ENCODE measurements at regions of chr2 and their contacts with region 1.

Region 1: DNA sequence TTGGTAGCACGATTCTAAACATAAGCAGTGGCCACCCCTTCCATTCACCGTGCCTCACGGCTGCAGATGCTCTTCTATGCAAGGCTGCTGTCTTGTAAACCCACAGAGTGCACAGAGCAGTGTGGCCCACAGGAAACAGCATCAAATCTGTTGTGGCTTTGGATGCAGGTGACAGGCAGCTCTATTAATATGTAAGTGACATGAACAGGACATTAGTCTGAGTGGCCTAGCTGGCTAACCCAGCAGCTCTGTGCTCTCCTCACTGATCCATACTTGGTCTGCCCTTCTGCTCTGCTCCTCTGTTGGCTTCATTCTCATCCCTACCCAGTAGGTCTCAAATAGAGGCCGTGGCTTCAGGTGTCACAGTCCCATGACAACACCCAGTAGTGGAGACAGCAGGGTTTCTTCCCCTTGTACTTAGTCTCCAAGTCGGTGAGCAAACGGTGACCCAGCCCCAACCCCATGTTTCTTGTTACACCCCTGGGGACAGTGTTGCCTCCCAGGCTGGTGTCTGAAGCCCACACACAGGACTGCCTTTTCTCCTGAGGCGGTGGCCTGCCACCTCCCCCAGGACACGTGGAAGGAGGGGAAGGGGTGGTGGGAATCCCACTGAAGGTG is 5.8 kb downstream of the SH3RF3 start:
- DNase-seq: no peak
- H3K4me3 Mint-ChIP-seq: no peak overlapping the region
- H3K27ac Mint-ChIP-seq: no peak overlapping the region
- H3K4me1 Mint-ChIP-seq: peaks cover 22% of the 10 kb centered on the region
- H3K27me3 Mint-ChIP-seq: peaks cover 72% of the 10 kb centered on the region

Region 2: DNA sequence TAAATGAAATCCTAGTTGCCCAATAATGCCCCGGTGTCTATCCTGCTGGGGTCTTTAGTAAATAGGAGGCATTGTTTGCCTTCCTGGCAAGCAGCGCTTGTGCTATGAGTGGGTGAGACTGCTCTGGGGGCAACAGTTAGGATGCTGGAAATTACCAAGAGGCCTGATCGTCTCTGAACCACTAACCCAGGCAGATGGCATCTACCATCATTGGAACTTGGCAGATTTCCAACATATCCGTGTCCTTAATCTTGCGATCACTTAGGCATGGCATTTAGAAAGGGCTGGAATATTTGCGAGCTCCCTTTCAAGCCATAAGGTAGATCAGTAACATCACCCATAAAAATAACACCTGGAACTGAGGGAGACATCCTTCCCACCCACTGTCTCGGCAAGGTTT is 24.7 kb before region 1 on chr2:
- CTCF ChIA-PET with region 1: no interaction called
- DNase-seq: no peak
- H3K4me3 Mint-ChIP-seq: no peak overlapping the region
- H3K27ac Mint-ChIP-seq: no peak overlapping the region
- H3K4me1 Mint-ChIP-seq: no peaks in the 10 kb centered on the region
- H3K27me3 Mint-ChIP-seq: no peaks in the 10 kb centered on the region

Region 3: DNA sequence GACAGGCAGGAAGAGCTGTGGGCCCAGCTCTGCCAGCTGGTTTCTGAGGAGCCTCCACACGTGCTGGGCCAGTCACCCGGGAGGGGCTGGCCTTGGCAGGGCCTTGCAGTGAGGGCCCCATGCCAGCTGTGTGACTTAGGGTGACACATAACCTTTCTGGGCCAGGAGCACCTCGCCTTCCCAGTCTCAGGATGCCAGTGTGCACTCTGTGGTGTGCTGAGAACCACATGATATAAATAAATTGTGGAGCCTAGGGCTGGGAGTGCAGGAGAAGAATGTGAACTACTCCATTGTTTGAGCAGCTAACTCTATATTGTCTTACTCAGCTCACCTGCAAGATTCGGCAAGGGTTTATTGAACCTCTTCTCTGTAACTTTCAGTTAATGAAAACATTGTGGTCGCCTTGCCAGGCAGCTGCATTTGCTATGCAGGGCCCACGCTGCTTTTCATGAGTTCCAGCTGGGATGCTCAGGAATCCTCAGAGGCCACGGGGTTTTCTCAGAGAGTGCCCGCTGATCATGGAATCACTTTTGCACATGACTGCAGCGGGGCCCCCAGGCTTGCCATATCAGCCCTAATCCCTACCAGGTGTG is 216.4 kb after region 1 on chr2:
- CTCF ChIA-PET with region 1: no interaction called
- DNase-seq: no peak
- H3K4me3 Mint-ChIP-seq: no peak overlapping the region
- H3K27ac Mint-ChIP-seq: no peak overlapping the region
- H3K4me1 Mint-ChIP-seq: peaks cover 43% of the 10 kb centered on the region
- H3K27me3 Mint-ChIP-seq: peaks cover 15% of the 10 kb centered on the region

Region 4: DNA sequence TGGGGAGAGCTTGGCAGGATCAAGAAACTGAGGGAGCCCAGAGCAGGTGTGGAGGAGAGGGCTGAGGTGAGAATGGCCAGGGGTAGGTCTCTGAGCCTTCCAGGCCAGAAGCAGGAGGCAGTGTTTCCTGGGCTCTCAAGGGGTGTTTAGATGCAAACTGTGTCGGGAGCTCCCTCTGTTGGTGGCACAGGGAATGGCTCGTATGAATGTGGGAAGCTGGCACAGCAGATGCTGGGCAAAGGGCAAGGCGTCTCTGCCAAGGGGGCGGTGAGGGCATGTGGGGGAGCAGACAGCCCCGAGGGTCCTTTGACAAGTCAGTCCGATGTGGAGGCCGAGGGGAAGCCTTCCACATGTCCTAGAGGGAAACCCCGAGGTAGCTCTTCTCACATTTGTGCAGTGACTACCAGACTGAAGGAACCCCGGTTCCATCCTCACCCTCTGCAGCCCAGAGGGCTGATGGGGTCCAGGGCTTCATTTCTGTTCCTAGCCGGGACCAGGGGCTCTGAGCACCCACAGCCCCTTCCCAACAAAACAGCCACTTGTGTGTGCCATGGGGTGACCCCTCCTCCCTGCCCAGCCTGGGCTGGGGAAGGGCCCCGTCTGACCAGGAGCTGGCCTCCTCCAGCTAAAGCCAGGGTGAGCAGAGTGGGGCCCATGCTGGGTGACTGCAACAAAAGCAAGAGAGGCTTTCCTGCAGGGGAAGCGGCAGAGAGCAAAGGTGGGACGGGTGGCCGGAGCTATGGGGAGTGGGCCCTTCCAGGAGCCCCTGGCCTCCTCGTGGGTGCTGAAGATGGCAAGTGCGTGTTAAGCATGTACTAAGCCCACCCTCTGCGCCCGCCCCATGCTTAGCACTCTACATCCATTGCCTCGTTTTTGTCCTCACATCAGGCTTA is 375.5 kb after region 1 on chr2:
- CTCF ChIA-PET with region 1: interaction called, 68 read pairs
- DNase-seq: peak; percentile 86
- H3K4me3 Mint-ChIP-seq: no peak overlapping the region
- H3K27ac Mint-ChIP-seq: no peak overlapping the region
- H3K4me1 Mint-ChIP-seq: no peaks in the 10 kb centered on the region
- H3K27me3 Mint-ChIP-seq: peaks cover 14% of the 10 kb centered on the region